ENCODE measurements at regions of chr17 and their contacts with region 1.

Region 1: GRCh38 chr17:46044286-46044928 is 45.4 kb downstream of the STH start:
- DNase-seq: peak; percentile 42 to 65 (median 50)
- H3K4me3 ChIP-seq: no peak overlapping the region
- H3K4me3 Mint-ChIP-seq: peak overlapping the region in 1 of 8 donors; percentile 13
- H3K27ac ChIP-seq: no peak overlapping the region
- H3K27ac Mint-ChIP-seq: peak overlapping the region; percentile 4 to 94 (median 69)
- H3K4me1 ChIP-seq: no peaks in the 10 kb centered on the region
- H3K4me1 Mint-ChIP-seq: peaks cover 9 to 18% (median 14%) of the 10 kb centered on the region in 4 donors
- H3K27me3 ChIP-seq: no peaks in the 10 kb centered on the region
- H3K27me3 Mint-ChIP-seq: no peaks in the 10 kb centered on the region

Region 2: GRCh38 chr17:46002311-46002972 is 42.0 kb before region 1 on chr17:
- CTCF ChIA-PET with region 1: interaction called, 39 read pairs
- POLR2A ChIA-PET with region 1: interaction called, 4 read pairs
- intact Hi-C with region 1: loop called (anchors 1 kb)
- DNase-seq: peak; percentile 67 to 78 (median 72)
- H3K4me3 ChIP-seq: no peak overlapping the region
- H3K4me3 Mint-ChIP-seq: no peak overlapping the region
- H3K27ac ChIP-seq: no peak overlapping the region
- H3K27ac Mint-ChIP-seq: no peak overlapping the region
- H3K4me1 ChIP-seq: peaks cover 5% of the 10 kb centered on the region
- H3K4me1 Mint-ChIP-seq: no peaks in the 10 kb centered on the region
- H3K27me3 ChIP-seq: no peaks in the 10 kb centered on the region
- H3K27me3 Mint-ChIP-seq: peaks cover 0 to 2% of the 10 kb centered on the region in 2 donors

Region 3: GRCh38 chr17:46061435-46061834 is 17.0 kb after region 1 on chr17:
- CTCF ChIA-PET with region 1: interaction called, 24 read pairs
- POLR2A ChIA-PET with region 1: no interaction called
- intact Hi-C with region 1: no loop called
- DNase-seq: no peak
- H3K4me3 ChIP-seq: no peak overlapping the region
- H3K4me3 Mint-ChIP-seq: no peak overlapping the region
- H3K27ac ChIP-seq: no peak overlapping the region
- H3K27ac Mint-ChIP-seq: peak overlapping the region in 3 of 7 donors; percentile 8 to 46 (median 42)
- H3K4me1 ChIP-seq: peaks cover 7% of the 10 kb centered on the region
- H3K4me1 Mint-ChIP-seq: peaks cover 18 to 30% (median 20%) of the 10 kb centered on the region in 4 donors
- H3K27me3 ChIP-seq: no peaks in the 10 kb centered on the region
- H3K27me3 Mint-ChIP-seq: no peaks in the 10 kb centered on the region

Region 4: GRCh38 chr17:46108550-46109110 is 64.2 kb after region 1 on chr17:
- CTCF ChIA-PET with region 1: no interaction called
- POLR2A ChIA-PET with region 1: no interaction called
- intact Hi-C with region 1: loop called (anchors 10 kb)
- DNase-seq: no peak
- H3K4me3 ChIP-seq: no peak overlapping the region
- H3K4me3 Mint-ChIP-seq: peak overlapping the region in 3 of 8 donors; percentile 17 to 44 (median 24)
- H3K27ac ChIP-seq: no peak overlapping the region
- H3K27ac Mint-ChIP-seq: peak overlapping the region in 5 of 7 donors; percentile 5 to 54 (median 23)
- H3K4me1 ChIP-seq: peaks cover 98% of the 10 kb centered on the region
- H3K4me1 Mint-ChIP-seq: peaks cover 65 to 98% (median 77%) of the 10 kb centered on the region in 4 donors
- H3K27me3 ChIP-seq: no peaks in the 10 kb centered on the region
- H3K27me3 Mint-ChIP-seq: no peaks in the 10 kb centered on the region

Region 5: DNA sequence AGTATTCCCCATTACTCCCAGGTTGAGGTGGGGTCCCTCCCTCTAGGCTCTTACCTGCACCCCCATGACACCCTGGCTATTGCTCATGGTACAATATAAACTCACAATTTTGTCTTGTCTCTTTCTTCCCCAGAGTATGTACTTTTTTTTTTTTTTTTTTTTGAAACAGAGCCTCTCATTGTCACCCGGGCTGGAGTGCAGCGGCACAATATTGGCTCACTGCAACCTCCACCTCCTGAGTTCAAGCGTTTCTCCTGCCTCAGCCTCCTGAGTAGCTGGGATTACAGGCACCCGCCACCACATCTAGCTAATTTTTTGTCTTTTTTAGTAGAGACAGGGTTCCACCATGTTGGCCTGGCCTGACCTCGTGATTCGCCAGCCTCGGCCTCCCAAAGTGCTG is 140.3 kb after region 1 on chr17:
- CTCF ChIA-PET with region 1: interaction called, 30 read pairs
- POLR2A ChIA-PET with region 1: interaction called, 5 read pairs
- intact Hi-C with region 1: no loop called
- DNase-seq: no peak
- H3K4me3 ChIP-seq: no peak overlapping the region
- H3K4me3 Mint-ChIP-seq: peak overlapping the region in 7 of 8 donors; percentile 15 to 83 (median 46)
- H3K27ac ChIP-seq: no peak overlapping the region
- H3K27ac Mint-ChIP-seq: peak overlapping the region in 6 of 7 donors; percentile 5 to 81 (median 33)
- H3K4me1 ChIP-seq: peaks cover 95% of the 10 kb centered on the region
- H3K4me1 Mint-ChIP-seq: peaks cover 62 to 100% (median 86%) of the 10 kb centered on the region in 4 donors
- H3K27me3 ChIP-seq: no peaks in the 10 kb centered on the region
- H3K27me3 Mint-ChIP-seq: no peaks in the 10 kb centered on the region